PC-3 (cell line): ENCODE measurements at regions of chr11 and their contacts with region 1.

Region 1: DNA sequence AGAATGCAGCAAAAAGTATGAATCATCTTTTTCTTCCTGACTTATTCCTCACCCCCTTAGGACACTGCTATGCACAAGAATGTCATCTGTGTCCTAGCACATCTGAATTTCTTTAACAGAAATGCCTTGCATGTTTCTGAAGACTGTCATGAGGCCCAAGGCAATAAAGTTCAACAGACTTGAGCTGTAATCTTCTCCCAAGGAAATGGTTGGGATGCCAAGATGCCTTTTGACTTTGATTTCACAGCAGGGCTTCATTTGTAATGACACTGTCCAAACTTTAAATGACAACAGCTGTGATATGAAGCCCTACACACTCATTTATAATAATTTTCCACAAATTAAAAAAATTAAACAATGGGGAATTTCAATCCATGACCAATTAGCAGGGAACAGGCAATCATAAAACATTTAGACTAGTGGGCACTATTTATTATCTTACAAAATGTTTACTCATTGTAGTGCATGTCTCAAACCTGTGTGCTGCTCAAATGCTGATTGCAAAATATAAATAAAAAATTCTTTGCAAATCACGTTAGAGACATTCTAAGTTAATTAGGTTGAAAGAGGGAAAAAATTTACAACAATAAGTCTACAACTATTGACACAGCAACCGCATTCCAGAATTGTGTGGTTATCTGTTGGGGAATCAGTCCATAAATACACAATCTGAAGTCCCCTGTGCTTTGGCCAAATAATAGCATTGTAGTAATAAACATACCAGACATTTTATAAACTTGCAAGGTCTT is 242.3 kb downstream of the SWAP70 start:
- DNase-seq: peak; percentile 95
- ATAC-seq: peak; percentile 94
- H3K4me3 ChIP-seq: peak overlapping the region; percentile 1; the same call in 1 of the 2 replicates
- H3K27ac ChIP-seq: peak overlapping the region; percentile 72
- H3K4me1 ChIP-seq: peaks cover 34% of the 10 kb centered on the region
- H3K27me3 ChIP-seq: no peaks in the 10 kb centered on the region
- CTCF ChIP-seq: no peak

Region 2: GRCh38 chr11:9861860-9862725 is 44.1 kb before region 1 on chr11:
- CTCF ChIA-PET with region 1: no interaction called
- POLR2A ChIA-PET with region 1: no interaction called
- intact Hi-C with region 1: loop called (anchors 5 kb)
- DNase-seq: peak; percentile 83
- ATAC-seq: peak; percentile 94
- H3K4me3 ChIP-seq: no peak overlapping the region
- H3K27ac ChIP-seq: no peak overlapping the region
- H3K4me1 ChIP-seq: peaks cover 19% of the 10 kb centered on the region
- H3K27me3 ChIP-seq: no peaks in the 10 kb centered on the region
- CTCF ChIP-seq: peak; percentile 90